Posterior vena cava (tissue), 2 donors: ENCODE measurements at regions of chr12 and their contacts with region 1.

Region 1: GRCh38 chr12:13099066-13099843 is 4.2 kb downstream of the GSG1 start:
- DNase-seq: no peak

Region 2: DNA sequence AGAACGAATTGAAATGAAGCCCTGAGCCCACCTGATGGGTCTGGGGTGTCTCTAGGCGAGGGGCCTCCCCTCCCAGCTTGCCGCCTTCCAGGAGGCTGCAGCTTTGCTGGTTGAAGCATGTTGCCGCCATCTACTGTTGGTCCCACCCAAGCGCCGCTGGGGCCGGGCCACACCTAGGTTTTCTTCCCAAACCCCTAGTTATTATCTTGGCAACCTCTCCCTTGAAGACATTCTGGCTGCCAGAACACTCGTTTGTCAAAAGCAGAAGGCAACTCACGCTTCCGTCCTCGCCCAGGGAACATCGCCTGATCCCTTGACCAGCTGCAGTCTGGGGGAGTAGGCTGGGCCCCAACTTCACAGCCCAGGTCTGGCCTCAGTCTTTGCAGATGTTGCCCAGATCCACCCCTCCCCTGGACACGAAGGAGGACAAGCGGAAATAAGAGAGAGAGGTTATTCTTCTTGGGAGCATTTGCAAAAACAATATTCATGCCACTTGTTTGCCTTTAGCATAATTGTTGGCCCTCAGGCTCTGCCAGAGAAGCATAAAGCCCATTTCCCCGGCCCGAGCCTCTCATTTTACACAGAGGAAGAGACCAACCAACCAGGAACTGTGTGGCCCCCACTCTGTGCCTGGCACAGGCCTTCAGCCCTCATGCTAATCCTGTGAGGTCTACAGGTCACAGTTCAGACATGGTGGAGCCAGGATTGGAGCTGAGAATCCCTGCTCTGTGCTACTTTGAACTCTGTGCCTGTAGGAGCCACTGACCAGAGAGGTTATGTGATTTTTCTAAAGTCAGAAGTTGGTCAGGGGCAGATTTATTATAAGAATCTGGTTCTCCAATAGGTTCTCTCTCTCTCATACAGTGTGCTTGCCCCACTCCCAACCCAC is 104.0 kb after region 1 on chr12:
- intact Hi-C with region 1: loop called (anchors 5 kb)
- DNase-seq: peak; percentile 89